ENCODE measurements at regions of chr17 and their contacts with region 1.

Region 1: GRCh38 chr17:28267720-28268609 is 51.0 kb upstream of the TMEM97 start:
- DNase-seq: no peak
- H3K4me3 Mint-ChIP-seq: no peak overlapping the region
- H3K27ac Mint-ChIP-seq: no peak overlapping the region
- H3K4me1 Mint-ChIP-seq: no peaks in the 10 kb centered on the region
- H3K27me3 Mint-ChIP-seq: peaks cover 40% of the 10 kb centered on the region
- CTCF ChIP-seq: no peak

Region 2: DNA sequence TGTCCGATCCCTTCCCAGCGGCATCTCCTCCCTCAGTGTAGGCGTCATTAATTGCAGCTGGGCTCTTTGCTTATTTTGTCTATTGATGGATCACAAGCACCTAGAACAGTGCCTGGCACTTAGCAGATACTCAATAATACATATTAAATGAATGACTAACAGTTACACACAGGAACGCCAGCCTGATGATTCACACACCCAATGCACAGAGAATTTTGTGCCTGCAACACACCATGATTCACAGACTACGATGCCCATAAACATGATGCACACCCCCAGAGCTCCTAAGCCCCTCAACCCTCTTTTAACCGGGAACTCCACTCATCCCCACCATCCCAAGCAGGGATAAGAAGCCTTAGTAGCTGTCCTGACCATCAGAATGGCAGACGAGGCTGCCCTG is 15.5 kb before region 1 on chr17:
- CTCF ChIA-PET with region 1: interaction called, 27 read pairs
- POLR2A ChIA-PET with region 1: interaction called, 3 read pairs
- intact Hi-C with region 1: no loop called
- DNase-seq: peak; percentile 53
- H3K4me3 Mint-ChIP-seq: no peak overlapping the region
- H3K27ac Mint-ChIP-seq: no peak overlapping the region
- H3K4me1 Mint-ChIP-seq: peaks cover 15% of the 10 kb centered on the region
- H3K27me3 Mint-ChIP-seq: peaks cover 23% of the 10 kb centered on the region
- CTCF ChIP-seq: no peak